ENCODE measurements at regions of chr16 and their contacts with region 1.

Region 1: GRCh38 chr16:66562407-66562806 is 3.8 kb upstream of the CMTM1 start:
- DNase-seq: peak in 3 of 14 experiments; percentile 44 to 60 (median 54)
- ATAC-seq: peak; percentile 64
- H3K4me3 ChIP-seq: no peak overlapping the region
- H3K4me3 Mint-ChIP-seq: peak overlapping the region; percentile 37
- H3K27ac ChIP-seq: no peak overlapping the region
- H3K27ac Mint-ChIP-seq: peak overlapping the region; percentile 49
- H3K4me1 ChIP-seq: peaks cover 38% of the 10 kb centered on the region
- H3K4me1 Mint-ChIP-seq: peaks cover 65% of the 10 kb centered on the region
- H3K27me3 ChIP-seq: no peaks in the 10 kb centered on the region
- H3K27me3 Mint-ChIP-seq: no peaks in the 10 kb centered on the region
- CTCF ChIP-seq: peak; percentile 58

Region 2: GRCh38 chr16:66588981-66589713 is 26.7 kb after region 1 on chr16:
- CTCF ChIA-PET with region 1: interaction called, 27 read pairs
- POLR2A ChIA-PET with region 1: interaction called, 4 read pairs
- intact Hi-C with region 1: loop called (anchors 1 to 2 kb)
- DNase-seq: peak; percentile 45 to 87 (median 63)
- ATAC-seq: peak; percentile 93
- H3K4me3 ChIP-seq: no peak overlapping the region
- H3K4me3 Mint-ChIP-seq: peak overlapping the region; percentile 79
- H3K27ac ChIP-seq: no peak overlapping the region
- H3K27ac Mint-ChIP-seq: peak overlapping the region; percentile 52
- H3K4me1 ChIP-seq: peaks cover 26% of the 10 kb centered on the region
- H3K4me1 Mint-ChIP-seq: peaks cover 33% of the 10 kb centered on the region
- H3K27me3 ChIP-seq: no peaks in the 10 kb centered on the region
- H3K27me3 Mint-ChIP-seq: no peaks in the 10 kb centered on the region
- CTCF ChIP-seq: peak; percentile 74

Region 3: GRCh38 chr16:66728117-66728787 is 165.8 kb after region 1 on chr16:
- CTCF ChIA-PET with region 1: no interaction called
- POLR2A ChIA-PET with region 1: no interaction called
- intact Hi-C with region 1: loop called in 1 of 2 experiments (anchors 5 kb)
- DNase-seq: peak in 4 of 14 experiments; percentile 11 to 68 (median 60)
- ATAC-seq: peak; percentile 87
- H3K4me3 ChIP-seq: no peak overlapping the region
- H3K4me3 Mint-ChIP-seq: no peak overlapping the region
- H3K27ac ChIP-seq: no peak overlapping the region
- H3K27ac Mint-ChIP-seq: peak overlapping the region; percentile 5
- H3K4me1 ChIP-seq: no peaks in the 10 kb centered on the region
- H3K4me1 Mint-ChIP-seq: peaks cover 6% of the 10 kb centered on the region
- H3K27me3 ChIP-seq: no peaks in the 10 kb centered on the region
- H3K27me3 Mint-ChIP-seq: no peaks in the 10 kb centered on the region
- CTCF ChIP-seq: peak; percentile 83

Region 4: GRCh38 chr16:66751303-66751991 is 189.0 kb after region 1 on chr16 and contains the start of gene DYNC1LI2:
- CTCF ChIA-PET with region 1: interaction called, 10 read pairs
- POLR2A ChIA-PET with region 1: no interaction called
- intact Hi-C with region 1: no loop called
- DNase-seq: peak; percentile 66 to 92 (median 78)
- ATAC-seq: peak; percentile 94
- H3K4me3 ChIP-seq: peak within 1 kb of the TSS; percentile 81
- H3K4me3 Mint-ChIP-seq: peak within 1 kb of the TSS; percentile 94
- H3K27ac ChIP-seq: peak within 1 kb of the TSS in 1 of 2 donors; percentile 66
- H3K27ac Mint-ChIP-seq: peak within 1 kb of the TSS; percentile 91
- H3K4me1 ChIP-seq: peaks cover 32% of the 10 kb centered on the region
- H3K4me1 Mint-ChIP-seq: peaks cover 37% of the 10 kb centered on the region
- H3K27me3 ChIP-seq: no peaks in the 10 kb centered on the region
- H3K27me3 Mint-ChIP-seq: peaks cover 19% of the 10 kb centered on the region
- CTCF ChIP-seq: peak; percentile 67
- total RNA-seq, gene DYNC1LI2: 81.8 to 82.4 TPM